Heart left ventricle (tissue), 16 donors: ENCODE measurements at regions of chr2 and their contacts with region 1.

Region 1: GRCh38 chr2:133193544-133194361 is 374.5 kb downstream of the NCKAP5 start:
- DNase-seq: no peak
- ATAC-seq: no peak
- H3K4me3 ChIP-seq: no peak overlapping the region
- H3K27ac ChIP-seq: no peak overlapping the region
- H3K4me1 ChIP-seq: no peaks in the 10 kb centered on the region
- H3K27me3 ChIP-seq: no peaks in the 10 kb centered on the region
- CTCF ChIP-seq: no peak
- POLR2A ChIP-seq: no peak

Region 2: GRCh38 chr2:133130548-133131246 is 63.1 kb before region 1 on chr2:
- intact Hi-C with region 1: no loop called
- DNase-seq: no peak
- ATAC-seq: no peak
- H3K4me3 ChIP-seq: no peak overlapping the region
- H3K27ac ChIP-seq: no peak overlapping the region
- H3K4me1 ChIP-seq: no peaks in the 10 kb centered on the region
- H3K27me3 ChIP-seq: no peaks in the 10 kb centered on the region
- CTCF ChIP-seq: no peak
- POLR2A ChIP-seq: no peak

Region 3: GRCh38 chr2:133213651-133214050 is 19.9 kb after region 1 on chr2:
- intact Hi-C with region 1: loop called in 1 of 10 experiments (anchors 1 kb)
- DNase-seq: no peak
- ATAC-seq: no peak
- H3K4me3 ChIP-seq: no peak overlapping the region
- H3K27ac ChIP-seq: no peak overlapping the region
- H3K4me1 ChIP-seq: no peaks in the 10 kb centered on the region
- H3K27me3 ChIP-seq: no peaks in the 10 kb centered on the region
- CTCF ChIP-seq: no peak
- POLR2A ChIP-seq: no peak

Region 4: DNA sequence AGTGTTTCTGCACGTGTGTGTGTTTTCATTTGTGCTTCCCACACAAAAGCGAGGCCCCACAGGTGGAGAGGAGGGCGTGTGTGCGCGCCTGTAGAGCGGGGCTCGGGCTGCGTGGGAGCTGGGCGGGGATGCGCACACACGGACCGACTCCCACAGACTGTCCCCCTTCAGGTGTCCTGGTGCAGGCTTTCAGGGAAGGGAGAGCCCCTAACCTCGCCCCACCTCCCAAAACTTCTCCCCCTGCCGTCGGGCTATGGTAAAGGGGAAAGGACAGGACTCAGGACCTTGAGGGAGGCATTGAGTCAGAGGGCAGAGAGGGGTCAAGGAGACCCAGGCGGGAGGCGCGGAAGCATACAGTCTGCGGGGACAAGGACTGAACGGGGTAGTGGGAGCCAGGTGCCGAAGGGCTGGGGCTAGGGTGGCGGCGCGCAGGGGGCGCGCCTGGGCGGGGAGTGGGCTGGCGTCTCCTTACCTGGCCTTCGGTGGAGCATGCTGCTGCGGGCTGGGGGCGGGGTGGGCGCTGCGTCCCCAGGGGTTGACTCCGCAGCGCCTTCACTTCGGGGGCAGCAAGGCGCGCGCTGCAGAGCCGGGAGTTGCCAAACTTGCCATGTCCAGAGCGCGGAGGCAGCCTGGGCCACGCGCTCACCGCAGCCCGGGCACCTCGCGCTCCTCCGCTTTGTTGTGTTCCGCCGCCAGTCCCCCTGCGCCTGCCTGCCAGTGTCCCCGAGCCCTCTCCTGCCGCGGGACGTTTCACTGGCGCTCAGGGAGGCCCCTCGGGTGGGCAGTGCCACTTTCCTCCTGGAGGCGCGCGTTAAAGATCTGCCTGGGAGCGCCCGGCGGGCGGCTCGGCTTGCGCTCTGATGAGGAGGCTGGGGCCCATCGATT is 72.5 kb after region 1 on chr2:
- intact Hi-C with region 1: no loop called
- DNase-seq: peak in 1 of 5 donors; percentile 38
- ATAC-seq: peak; percentile 36 to 57 (median 50)
- H3K4me3 ChIP-seq: peak overlapping the region; percentile 26 to 60 (median 48)
- H3K27ac ChIP-seq: peak overlapping the region in 4 of 12 donors; percentile 15 to 46 (median 40)
- H3K4me1 ChIP-seq: peaks cover 0 to 27% (median 0%) of the 10 kb centered on the region in 12 donors
- H3K27me3 ChIP-seq: peaks cover 0 to 10% (median 0%) of the 10 kb centered on the region in 9 donors
- CTCF ChIP-seq: no peak
- POLR2A ChIP-seq: no peak